Ascending aorta (tissue), 2 donors: ENCODE measurements at regions of chr15 and their contacts with region 1.

Region 1: GRCh38 chr15:40694688-40695468 is at the start of gene RAD51:
- DNase-seq: peak; percentile 70 to 94
- H3K4me3 ChIP-seq: peak within 1 kb of the TSS; percentile 82 to 99
- H3K27ac ChIP-seq: peak within 1 kb of the TSS; percentile 99
- H3K4me1 ChIP-seq: peaks cover 0 to 8% of the 10 kb centered on the region in 2 donors
- H3K27me3 ChIP-seq: no peaks in the 10 kb centered on the region
- CTCF ChIP-seq: no peak
- total RNA-seq, gene RAD51: not detected

Region 2: DNA sequence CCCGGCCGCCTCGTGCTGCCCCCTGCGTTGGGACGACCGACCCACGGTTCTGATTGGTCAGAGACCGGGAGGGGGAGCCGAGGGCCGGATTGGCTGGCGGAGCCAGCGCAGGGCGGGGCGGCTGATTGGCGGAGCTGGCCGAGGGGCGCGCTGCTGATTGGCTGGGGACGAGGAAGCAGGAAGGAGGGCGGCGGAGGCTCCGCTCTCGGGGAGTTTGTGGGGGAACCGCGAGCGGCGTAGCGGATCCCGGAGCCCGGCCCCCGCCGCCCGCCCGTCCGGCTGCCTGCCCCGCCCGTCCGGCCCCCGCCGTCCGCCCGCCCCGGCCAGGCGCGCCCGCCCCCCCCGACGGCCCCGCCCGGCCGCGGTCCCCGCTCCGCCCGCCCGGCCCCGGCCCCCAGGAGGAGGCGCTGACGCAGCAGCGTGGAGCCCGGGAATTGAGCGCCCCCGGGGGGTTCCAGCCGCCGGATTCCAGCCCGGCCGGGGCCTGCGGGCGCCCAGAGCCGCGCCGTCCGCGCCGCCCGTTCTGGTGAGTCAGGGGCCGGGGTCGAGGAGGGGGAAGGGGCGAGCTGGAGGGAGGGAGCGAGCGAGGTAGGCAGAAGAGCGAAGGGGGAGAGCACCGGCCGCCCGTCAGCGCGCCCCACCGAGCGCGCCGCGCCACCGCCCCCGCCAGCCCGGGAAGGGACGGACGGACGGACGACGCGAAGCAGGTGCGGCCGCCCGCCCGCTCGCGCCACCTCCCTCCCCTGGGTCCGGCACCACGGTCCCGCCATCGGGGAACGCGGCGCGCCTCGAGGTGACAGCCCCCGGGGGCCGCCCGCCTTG is 253.9 kb before region 1 on chr15 and contains the start of gene BAHD1:
- intact Hi-C with region 1: loop called (anchors 2 kb)
- DNase-seq: peak; percentile 85 to 97
- H3K4me3 ChIP-seq: peak within 1 kb of the TSS; percentile 95 to 97
- H3K27ac ChIP-seq: peak within 1 kb of the TSS; percentile 31 to 75
- H3K4me1 ChIP-seq: peaks cover 12 to 33% of the 10 kb centered on the region in 2 donors
- H3K27me3 ChIP-seq: peaks cover 11% of the 10 kb centered on the region
- CTCF ChIP-seq: peak in 1 of 3 experiments; percentile 28
- total RNA-seq, gene BAHD1: 10.6 TPM

Region 3: GRCh38 chr15:40593588-40594428 is 101.1 kb before region 1 on chr15 and contains the start of gene KNL1:
- intact Hi-C with region 1: loop called (anchors 5 kb)
- DNase-seq: peak; percentile 72 to 96
- H3K4me3 ChIP-seq: peak within 1 kb of the TSS; percentile 50 to 73
- H3K27ac ChIP-seq: peak within 1 kb of the TSS; percentile 78 to 87
- H3K4me1 ChIP-seq: peaks cover 0 to 9% of the 10 kb centered on the region in 2 donors
- H3K27me3 ChIP-seq: no peaks in the 10 kb centered on the region
- CTCF ChIP-seq: no peak
- total RNA-seq, gene KNL1: not detected

Region 4: DNA sequence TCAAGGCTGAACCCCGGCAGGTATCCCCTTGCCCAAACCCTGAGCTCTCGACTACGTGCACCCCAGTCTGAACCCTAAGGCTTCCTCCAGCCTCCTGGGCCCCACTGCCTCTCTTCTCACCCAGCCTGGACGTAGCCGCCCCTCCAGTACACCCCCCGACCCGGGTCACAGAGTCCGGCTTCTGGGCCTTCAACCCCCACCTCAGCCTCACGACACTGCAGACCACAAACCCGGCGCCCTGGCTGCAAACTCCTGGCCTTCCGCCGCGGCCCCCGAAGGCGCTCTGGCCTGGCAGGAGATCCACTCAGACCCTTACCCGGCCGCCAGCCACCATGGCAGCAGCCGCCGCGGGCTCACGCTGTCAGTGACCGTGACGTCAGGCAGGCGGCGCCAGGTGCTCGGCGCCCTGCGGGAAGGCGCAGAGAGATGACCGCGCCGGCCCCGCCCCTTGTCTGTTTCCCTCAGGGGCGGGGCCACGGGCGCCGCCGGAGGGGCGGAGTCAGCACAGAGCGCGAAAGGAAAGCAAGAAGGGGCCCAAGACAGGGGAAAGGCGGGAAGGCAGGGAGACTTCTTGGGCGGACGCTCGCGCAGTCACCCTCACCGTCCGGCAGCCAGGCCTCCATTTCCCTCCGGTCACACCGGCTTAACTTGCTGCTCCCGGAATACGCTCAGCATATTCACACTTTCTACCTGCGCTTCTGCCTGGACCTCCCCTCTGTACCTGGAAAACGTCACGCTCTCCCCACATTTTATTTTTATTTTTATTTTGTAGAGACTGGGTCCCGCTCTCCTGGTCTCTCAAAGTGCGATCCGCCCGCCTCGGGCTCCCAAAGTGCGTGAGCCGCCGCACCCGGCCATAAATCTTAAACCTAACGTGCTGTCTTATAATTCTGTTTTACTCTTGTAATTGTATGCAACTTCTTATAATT is 60.3 kb after region 1 on chr15 and contains the start of gene RMDN3:
- intact Hi-C with region 1: loop called (anchors 5 kb)
- DNase-seq: peak; percentile 62 to 95
- H3K4me3 ChIP-seq: peak within 1 kb of the TSS; percentile 95 to 98
- H3K27ac ChIP-seq: peak within 1 kb of the TSS; percentile 85 to 86
- H3K4me1 ChIP-seq: peaks cover 0 to 12% of the 10 kb centered on the region in 2 donors
- H3K27me3 ChIP-seq: no peaks in the 10 kb centered on the region
- CTCF ChIP-seq: peak in 1 of 3 experiments; percentile 17
- total RNA-seq, gene RMDN3: 6.0 TPM

Region 5: GRCh38 chr15:40782580-40783227 is 87.8 kb after region 1 on chr15:
- intact Hi-C with region 1: no loop called
- DNase-seq: no peak
- H3K4me3 ChIP-seq: no peak overlapping the region
- H3K27ac ChIP-seq: no peak overlapping the region
- H3K4me1 ChIP-seq: peaks cover 0 to 1% of the 10 kb centered on the region in 2 donors
- H3K27me3 ChIP-seq: no peaks in the 10 kb centered on the region
- CTCF ChIP-seq: peak in 2 of 3 experiments; percentile 8 to 29

Region 6: DNA sequence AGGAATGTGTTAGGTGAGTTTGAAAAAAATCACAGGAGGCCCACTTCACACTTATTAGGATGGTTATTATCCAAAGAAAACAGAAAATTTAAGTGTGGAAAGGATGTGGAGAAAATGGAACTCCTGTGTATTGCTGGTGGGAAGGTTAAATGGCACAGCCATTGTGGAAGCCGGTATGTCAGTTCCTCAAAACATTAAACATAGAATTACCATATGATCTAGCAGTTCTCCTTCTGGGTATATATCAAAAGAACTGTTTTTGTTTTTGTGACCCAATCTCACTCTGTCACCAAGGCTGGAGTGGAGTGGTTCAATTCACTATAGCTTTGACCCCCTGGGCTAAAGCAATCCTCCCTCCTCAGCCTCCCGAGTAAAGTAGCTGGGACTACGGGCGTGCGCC is 101.6 kb after region 1 on chr15:
- intact Hi-C with region 1: no loop called
- DNase-seq: no peak
- H3K4me3 ChIP-seq: no peak overlapping the region
- H3K27ac ChIP-seq: no peak overlapping the region
- H3K4me1 ChIP-seq: no peaks in the 10 kb centered on the region
- H3K27me3 ChIP-seq: no peaks in the 10 kb centered on the region
- CTCF ChIP-seq: no peak

Region 7: DNA sequence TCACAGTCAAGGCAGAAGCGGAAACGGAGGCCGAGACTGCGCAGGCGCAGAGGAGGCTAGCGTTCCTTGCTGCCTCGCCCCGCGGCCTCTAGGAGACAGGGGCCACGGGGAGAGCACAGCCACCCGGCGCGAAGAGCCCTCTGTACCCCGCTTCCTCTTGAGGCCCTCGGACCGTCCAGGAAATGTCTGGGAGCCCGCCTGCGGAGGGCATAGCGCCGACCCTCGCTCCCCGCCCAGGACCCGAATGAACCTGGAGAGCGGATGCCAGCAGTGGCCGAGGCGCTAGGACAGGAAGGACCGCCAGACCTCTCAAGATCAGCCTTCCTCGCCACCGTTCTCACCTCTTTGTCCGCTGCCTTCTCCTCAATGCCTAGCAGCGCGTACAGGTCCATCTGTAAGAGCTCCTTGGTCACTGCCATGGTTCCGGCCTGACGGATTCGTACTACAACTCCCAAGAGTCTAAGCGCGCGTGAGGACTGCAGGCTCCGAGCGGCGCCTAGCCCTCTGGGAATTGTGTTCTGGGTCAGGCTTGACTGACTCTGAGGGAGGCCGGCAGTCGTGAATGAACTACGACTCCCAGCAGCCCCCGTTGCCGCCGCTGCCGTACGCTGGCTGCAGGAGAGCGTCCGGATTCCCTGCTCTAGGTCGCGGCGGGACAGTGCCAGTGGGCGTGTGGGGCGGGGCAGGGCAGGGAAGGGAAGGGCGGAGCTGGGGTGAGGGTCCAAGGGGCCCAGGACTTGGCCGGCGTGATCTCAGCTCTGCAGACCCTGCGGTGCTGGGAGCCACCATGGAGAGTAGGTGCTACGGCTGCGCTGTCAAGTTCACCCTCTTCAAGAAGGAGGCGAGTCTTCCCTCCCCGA is 112.4 kb after region 1 on chr15 and contains the starts of genes DNAJC17 and ZFYVE19:
- intact Hi-C with region 1: loop called (anchors 5 kb)
- DNase-seq: peak; percentile 91 to 98
- H3K4me3 ChIP-seq: peak within 1 kb of the TSS; percentile 77 to 88
- H3K27ac ChIP-seq: peak within 1 kb of the TSS; percentile 89 to 93
- H3K4me1 ChIP-seq: peaks cover 0 to 18% of the 10 kb centered on the region in 2 donors
- H3K27me3 ChIP-seq: no peaks in the 10 kb centered on the region
- CTCF ChIP-seq: peak in 2 of 3 experiments; percentile 5 to 7
- total RNA-seq, gene DNAJC17: 26.2 TPM
- total RNA-seq, gene ZFYVE19: 61.0 TPM